ENCODE measurements at regions of chr11 and their contacts with region 1.

Region 1: DNA sequence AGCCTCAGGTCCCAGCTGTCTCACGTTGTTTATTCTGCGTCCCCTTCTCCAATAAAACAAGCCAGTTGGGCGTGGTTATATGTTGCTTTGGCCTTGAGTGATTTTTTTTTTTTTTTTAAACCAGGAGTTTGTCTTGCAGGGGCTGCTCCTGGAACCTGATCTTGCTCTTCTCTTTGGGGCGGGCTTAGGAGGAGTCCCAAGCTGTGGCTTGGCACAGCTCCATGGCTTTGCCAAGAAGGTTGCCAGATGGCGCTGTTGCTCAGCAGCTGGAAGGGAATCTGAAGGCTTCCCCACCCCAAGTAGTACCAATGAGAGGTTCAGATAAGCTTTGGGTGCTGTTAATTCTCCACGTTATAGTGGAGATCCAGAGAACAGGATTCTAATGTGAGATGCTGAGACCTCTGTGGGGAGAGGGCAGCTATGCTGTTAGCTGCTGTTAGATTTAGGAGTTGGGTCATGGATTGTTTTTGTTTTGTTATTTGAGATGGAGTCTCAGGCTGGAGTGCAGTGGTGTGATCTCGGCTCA is 2.0 kb upstream of the FERMT3 start:
- DNase-seq: peak; percentile 93
- H3K4me3 Mint-ChIP-seq: peak overlapping the region; percentile 13
- H3K27ac Mint-ChIP-seq: peak overlapping the region; percentile 89
- H3K4me1 Mint-ChIP-seq: peaks cover 49% of the 10 kb centered on the region
- H3K27me3 Mint-ChIP-seq: no peaks in the 10 kb centered on the region

Region 2: DNA sequence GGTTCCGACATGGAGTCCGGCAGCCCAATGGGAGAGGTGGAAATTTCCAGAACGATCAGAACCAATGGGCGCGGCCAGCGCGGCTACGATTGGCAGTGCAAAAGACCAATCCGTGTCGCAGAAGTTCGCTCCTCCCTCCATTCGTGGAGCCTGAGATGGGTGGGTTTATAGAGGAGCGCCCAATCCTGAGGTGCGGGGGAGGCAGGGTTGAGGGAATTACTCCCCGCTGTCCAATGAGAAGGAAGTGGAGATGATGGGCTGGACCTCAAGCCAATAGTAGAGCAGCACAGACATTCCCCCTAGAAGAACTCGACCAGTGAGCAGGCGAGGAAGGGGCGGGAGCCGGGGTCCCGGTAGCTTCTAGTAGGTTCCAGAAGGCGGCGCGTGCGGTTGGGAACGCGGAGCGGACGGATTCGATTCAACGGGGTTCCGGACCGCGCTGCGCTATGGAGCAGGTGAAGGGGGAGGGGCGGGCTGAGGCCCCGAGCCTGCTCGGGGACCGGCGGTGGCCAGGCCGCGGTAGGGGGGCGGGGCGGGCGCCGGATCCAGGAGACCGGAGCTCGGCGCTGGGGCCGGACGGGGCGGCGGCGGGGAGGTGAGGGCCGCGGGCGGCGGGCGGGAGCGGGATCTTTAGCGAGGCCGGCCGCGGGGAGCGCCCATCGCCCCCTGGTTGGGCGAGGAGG is 18.6 kb before region 1 on chr11 and contains the start of gene STIP1:
- CTCF ChIA-PET with region 1: interaction called, 25 read pairs
- intact Hi-C with region 1: loop called (anchors 1 kb)
- DNase-seq: peak; percentile 99
- H3K4me3 Mint-ChIP-seq: no peak within 1 kb of the TSS
- H3K27ac Mint-ChIP-seq: peak within 1 kb of the TSS; percentile 94
- H3K4me1 Mint-ChIP-seq: peaks cover 54% of the 10 kb centered on the region
- H3K27me3 Mint-ChIP-seq: no peaks in the 10 kb centered on the region
- total RNA-seq, gene STIP1: 264 to 272 TPM

Region 3: DNA sequence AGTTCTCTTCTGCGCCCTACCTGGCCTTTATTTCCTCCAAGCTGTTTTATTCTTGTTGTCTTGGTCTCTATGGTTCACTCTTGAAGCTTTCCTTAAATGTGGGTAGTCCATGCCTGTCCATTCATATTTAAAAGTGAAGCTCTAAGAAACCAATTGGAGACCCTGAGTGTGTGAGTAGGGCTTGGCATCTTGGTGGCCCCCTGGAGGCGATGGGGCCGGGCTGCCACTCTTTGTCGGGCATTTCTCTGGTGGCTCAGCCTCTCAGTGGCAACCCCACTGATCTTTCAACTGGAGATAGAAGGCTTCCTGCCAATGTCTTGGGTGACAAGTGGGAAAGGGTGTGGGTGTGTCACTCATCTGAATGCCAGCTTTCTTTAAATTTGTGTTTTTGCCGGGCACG is 12.4 kb after region 1 on chr11:
- CTCF ChIA-PET with region 1: interaction called, 20 read pairs
- intact Hi-C with region 1: no loop called
- DNase-seq: no peak
- H3K4me3 Mint-ChIP-seq: no peak overlapping the region
- H3K27ac Mint-ChIP-seq: no peak overlapping the region
- H3K4me1 Mint-ChIP-seq: peaks cover 19% of the 10 kb centered on the region
- H3K27me3 Mint-ChIP-seq: no peaks in the 10 kb centered on the region

Region 4: GRCh38 chr11:64240394-64241174 is 36.1 kb after region 1 on chr11 and contains the start of gene FKBP2:
- CTCF ChIA-PET with region 1: interaction called, 5 read pairs
- intact Hi-C with region 1: loop called (anchors 1 kb)
- DNase-seq: peak; percentile 97
- H3K4me3 Mint-ChIP-seq: peak within 1 kb of the TSS; percentile 92
- H3K27ac Mint-ChIP-seq: peak within 1 kb of the TSS; percentile 98
- H3K4me1 Mint-ChIP-seq: peaks cover 35% of the 10 kb centered on the region
- H3K27me3 Mint-ChIP-seq: no peaks in the 10 kb centered on the region
- total RNA-seq, gene FKBP2: 17.2 to 20.0 TPM

Region 5: DNA sequence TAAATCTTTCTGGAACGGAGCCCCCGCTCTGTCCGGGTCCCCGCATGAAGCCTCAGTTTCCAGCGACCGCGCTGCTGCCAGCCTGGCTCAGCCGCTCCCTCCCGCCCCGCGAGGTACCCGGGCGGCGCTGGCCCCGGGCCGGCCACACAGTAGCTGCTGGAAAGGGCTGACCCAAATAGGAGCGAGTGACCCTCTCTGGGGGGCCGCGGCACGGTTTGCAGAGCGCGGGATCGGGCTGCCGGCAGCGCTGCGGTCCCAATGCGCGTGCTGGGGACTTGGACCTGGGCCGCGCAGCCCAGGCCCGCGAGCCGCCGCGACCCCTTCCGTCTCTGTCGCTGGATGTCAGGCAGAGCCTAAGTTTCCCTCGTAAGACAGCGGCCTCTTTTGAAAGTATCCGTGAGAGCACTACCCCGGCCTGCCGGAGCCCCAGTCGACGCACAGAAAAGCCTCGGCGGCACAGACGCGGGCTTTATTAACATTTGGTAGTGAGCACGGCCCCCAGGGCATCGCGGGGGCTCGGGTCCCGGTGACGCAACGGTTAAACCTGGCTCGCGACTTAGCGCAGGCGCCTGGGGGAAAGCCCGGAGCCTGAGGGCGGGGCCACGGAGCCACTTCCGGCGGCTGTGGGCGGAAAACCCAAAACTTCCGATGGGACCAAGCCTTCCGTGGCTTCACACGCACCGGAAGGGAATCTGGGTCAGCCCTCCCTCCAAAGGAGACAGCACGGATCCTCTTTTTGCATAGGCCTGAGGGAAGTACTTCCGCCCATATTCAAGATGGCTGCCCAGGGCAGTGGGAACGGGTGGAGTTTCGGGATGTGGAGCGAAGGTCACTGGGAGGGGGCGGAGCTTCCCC is 65.1 kb after region 1 on chr11:
- CTCF ChIA-PET with region 1: interaction called, 8 read pairs
- intact Hi-C with region 1: loop called (anchors 1 kb)
- DNase-seq: peak; percentile 98
- H3K4me3 Mint-ChIP-seq: peak overlapping the region; percentile 90
- H3K27ac Mint-ChIP-seq: peak overlapping the region; percentile 88
- H3K4me1 Mint-ChIP-seq: peaks cover 15% of the 10 kb centered on the region
- H3K27me3 Mint-ChIP-seq: no peaks in the 10 kb centered on the region

Region 6: GRCh38 chr11:64358907-64359711 is 154.6 kb after region 1 on chr11 and contains the start of gene RPS6KA4:
- CTCF ChIA-PET with region 1: interaction called, 11 read pairs
- intact Hi-C with region 1: no loop called
- DNase-seq: peak; percentile 60
- H3K4me3 Mint-ChIP-seq: peak within 1 kb of the TSS; percentile 91
- H3K27ac Mint-ChIP-seq: peak within 1 kb of the TSS; percentile 34
- H3K4me1 Mint-ChIP-seq: peaks cover 41% of the 10 kb centered on the region
- H3K27me3 Mint-ChIP-seq: no peaks in the 10 kb centered on the region
- total RNA-seq, gene RPS6KA4: 19.1 to 21.3 TPM